MCF 10A (cell line): ENCODE measurements at regions of chr12 and their contacts with region 1.

Region 1: GRCh38 chr12:26126340-26127284 is 1.8 kb upstream of the BHLHE41 start:
- DNase-seq: peak; percentile 77
- H3K4me3 Mint-ChIP-seq: peak overlapping the region; percentile 94
- H3K27ac Mint-ChIP-seq: peak overlapping the region; percentile 63
- H3K4me1 Mint-ChIP-seq: peaks cover 24% of the 10 kb centered on the region
- H3K27me3 Mint-ChIP-seq: peaks cover 10% of the 10 kb centered on the region
- CTCF ChIP-seq: no peak

Region 2: GRCh38 chr12:25924491-25925463 is 201.8 kb before region 1 on chr12:
- CTCF ChIA-PET with region 1: no interaction called
- POLR2A ChIA-PET with region 1: no interaction called
- intact Hi-C with region 1: no loop called
- DNase-seq: peak; percentile 84
- H3K4me3 Mint-ChIP-seq: peak overlapping the region; percentile 21
- H3K27ac Mint-ChIP-seq: peak overlapping the region; percentile 52
- H3K4me1 Mint-ChIP-seq: peaks cover 15% of the 10 kb centered on the region
- H3K27me3 Mint-ChIP-seq: no peaks in the 10 kb centered on the region
- CTCF ChIP-seq: no peak

Region 3: GRCh38 chr12:26113853-26114719 is 12.5 kb before region 1 on chr12:
- CTCF ChIA-PET with region 1: interaction called, 9 read pairs
- POLR2A ChIA-PET with region 1: interaction called, 17 read pairs
- intact Hi-C with region 1: no loop called
- DNase-seq: peak; percentile 84
- H3K4me3 Mint-ChIP-seq: peak overlapping the region; percentile 72
- H3K27ac Mint-ChIP-seq: peak overlapping the region; percentile 89
- H3K4me1 Mint-ChIP-seq: peaks cover 22% of the 10 kb centered on the region
- H3K27me3 Mint-ChIP-seq: no peaks in the 10 kb centered on the region
- CTCF ChIP-seq: no peak

Region 4: DNA sequence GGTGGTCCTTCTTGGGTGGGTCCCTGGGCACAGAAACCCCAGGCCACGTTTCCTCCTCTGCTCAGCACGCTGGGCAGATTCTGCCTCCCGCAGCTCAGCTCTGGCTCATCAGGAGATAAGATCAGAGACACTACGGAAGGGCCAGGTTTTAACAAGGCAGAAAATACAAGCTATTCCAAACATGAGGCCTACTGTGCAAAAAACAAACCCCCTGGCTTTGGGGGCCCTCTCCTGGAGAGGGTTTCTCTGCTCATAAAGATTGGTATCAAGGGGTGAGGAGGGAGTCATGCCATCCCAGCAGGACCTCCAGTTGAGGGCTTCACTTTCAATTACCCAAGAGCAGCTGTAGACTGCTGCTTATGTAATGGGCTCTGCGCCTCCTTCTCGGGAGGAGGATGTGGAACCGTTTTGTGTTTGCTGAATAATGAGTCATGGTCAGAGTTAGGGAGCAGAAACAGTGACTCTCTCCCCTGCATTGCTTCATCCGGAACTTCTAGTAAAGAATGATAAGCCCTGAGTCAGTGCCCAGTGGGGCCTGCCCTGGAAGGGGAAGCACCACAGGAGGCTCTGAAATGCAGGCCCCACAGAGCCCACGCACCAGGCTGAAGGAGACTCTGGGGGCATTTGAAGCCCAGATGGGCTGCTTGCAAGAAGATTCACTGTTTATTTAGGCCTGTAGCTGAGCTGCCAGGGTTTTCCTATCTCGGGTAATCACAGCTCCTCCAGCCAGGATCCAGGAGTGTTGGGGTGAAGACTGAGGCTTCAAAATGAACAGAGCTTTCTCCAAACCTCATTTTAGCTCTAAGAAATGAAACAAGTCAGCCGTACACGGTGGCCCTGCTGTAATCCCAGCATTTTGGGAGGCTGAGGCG is 148.1 kb after region 1 on chr12:
- CTCF ChIA-PET with region 1: interaction called, 5 read pairs
- POLR2A ChIA-PET with region 1: interaction called, 10 read pairs
- intact Hi-C with region 1: no loop called
- DNase-seq: peak; percentile 99
- H3K4me3 Mint-ChIP-seq: no peak overlapping the region
- H3K27ac Mint-ChIP-seq: peak overlapping the region; percentile 64
- H3K4me1 Mint-ChIP-seq: peaks cover 37% of the 10 kb centered on the region
- H3K27me3 Mint-ChIP-seq: no peaks in the 10 kb centered on the region
- CTCF ChIP-seq: no peak

Region 5: DNA sequence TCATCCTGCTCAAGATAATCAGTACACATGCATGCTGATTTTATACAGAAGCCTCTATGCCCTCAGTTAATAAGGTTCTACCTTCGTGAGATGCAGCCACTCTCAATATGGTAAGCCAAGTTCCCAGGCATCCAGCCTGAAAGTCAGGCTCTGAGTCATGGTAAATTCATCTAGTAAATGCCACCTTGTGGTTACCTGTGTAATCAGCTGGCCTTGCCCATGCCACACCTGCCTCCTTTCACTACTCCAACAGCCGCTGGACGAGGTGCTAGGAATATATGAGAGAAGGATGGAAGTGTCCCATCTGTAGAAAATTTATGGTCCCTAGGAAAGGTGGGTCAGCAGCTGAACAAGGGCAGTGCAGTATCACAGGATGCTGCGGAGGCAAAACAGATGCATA is 276.0 kb after region 1 on chr12:
- CTCF ChIA-PET with region 1: interaction called, 78 read pairs
- POLR2A ChIA-PET with region 1: interaction called, 6 read pairs
- intact Hi-C with region 1: loop called (anchors 1 kb)
- DNase-seq: peak; percentile 78
- H3K4me3 Mint-ChIP-seq: no peak overlapping the region
- H3K27ac Mint-ChIP-seq: no peak overlapping the region
- H3K4me1 Mint-ChIP-seq: no peaks in the 10 kb centered on the region
- H3K27me3 Mint-ChIP-seq: no peaks in the 10 kb centered on the region
- CTCF ChIP-seq: peak; percentile 42

Region 6: DNA sequence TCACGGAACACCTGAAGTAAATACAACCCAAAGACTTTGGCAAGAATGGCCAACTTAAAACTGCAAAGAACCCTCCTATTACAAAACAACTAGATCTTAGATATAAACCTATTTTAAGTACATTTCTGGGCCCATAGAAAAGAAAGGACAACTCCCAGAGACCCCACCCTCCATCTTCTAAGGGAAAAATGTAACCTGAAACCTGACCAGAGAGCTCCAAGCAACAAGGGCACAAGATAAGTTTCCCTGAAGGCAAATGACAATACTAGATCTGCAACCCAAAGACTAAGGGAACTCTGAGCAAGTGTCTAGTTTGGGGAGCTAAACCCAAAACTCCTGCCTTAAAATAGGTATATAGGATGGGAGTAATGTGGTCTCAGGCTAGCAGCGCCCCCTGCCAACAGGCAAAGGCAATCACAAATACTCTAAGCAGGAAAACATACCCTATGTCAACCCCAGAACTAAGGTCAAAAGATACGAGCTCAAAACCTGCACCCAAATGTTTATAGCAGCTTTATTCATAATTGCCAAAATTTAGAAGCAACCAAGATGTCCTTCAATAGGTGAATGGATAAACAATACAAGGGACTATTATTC is 487.5 kb after region 1 on chr12:
- CTCF ChIA-PET with region 1: interaction called, 3 read pairs
- POLR2A ChIA-PET with region 1: no interaction called
- intact Hi-C with region 1: loop called (anchors 1 kb)
- DNase-seq: peak; percentile 51
- H3K4me3 Mint-ChIP-seq: no peak overlapping the region
- H3K27ac Mint-ChIP-seq: no peak overlapping the region
- H3K4me1 Mint-ChIP-seq: no peaks in the 10 kb centered on the region
- H3K27me3 Mint-ChIP-seq: no peaks in the 10 kb centered on the region
- CTCF ChIP-seq: peak; percentile 73